ENCODE measurements at regions of chr5 and their contacts with region 1.

Region 1: DNA sequence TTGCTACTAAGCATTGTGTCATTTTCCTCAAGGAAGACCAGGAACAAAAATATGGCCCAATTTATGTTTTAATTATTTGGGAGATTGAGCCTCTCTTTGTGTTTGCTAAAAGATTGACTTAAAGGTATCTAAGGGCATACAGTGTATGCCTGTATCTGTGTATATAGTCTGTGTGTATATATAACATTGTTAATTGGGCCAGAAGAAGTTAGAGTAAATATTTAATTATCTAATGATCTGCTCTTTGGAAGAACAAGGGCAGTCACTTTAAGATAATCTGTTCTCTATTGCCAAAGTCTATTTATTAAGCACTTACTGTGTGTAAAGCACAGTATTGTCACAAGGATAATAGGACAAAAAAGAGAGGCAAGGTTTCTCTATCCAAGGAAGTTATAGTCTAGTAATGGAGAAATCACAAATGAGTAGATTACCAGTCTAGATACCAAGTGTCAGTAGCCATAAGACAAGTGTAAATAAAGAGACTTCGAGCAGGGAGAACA is 51.4 kb downstream of the SV2C start:
- DNase-seq: no peak
- H3K4me3 ChIP-seq: no peak overlapping the region
- H3K4me3 Mint-ChIP-seq: no peak overlapping the region
- H3K27ac ChIP-seq: no peak overlapping the region
- H3K27ac Mint-ChIP-seq: no peak overlapping the region
- H3K4me1 ChIP-seq: no peaks in the 10 kb centered on the region
- H3K4me1 Mint-ChIP-seq: no peaks in the 10 kb centered on the region
- H3K27me3 ChIP-seq: no peaks in the 10 kb centered on the region
- H3K27me3 Mint-ChIP-seq: peaks cover 7 to 16% of the 10 kb centered on the region in 2 donors

Region 2: GRCh38 chr5:76114179-76114851 is 20.3 kb before region 1 on chr5:
- CTCF ChIA-PET with region 1: no interaction called
- POLR2A ChIA-PET with region 1: no interaction called
- intact Hi-C with region 1: no loop called
- DNase-seq: no peak
- H3K4me3 ChIP-seq: no peak overlapping the region
- H3K4me3 Mint-ChIP-seq: no peak overlapping the region
- H3K27ac ChIP-seq: no peak overlapping the region
- H3K27ac Mint-ChIP-seq: no peak overlapping the region
- H3K4me1 ChIP-seq: no peaks in the 10 kb centered on the region
- H3K4me1 Mint-ChIP-seq: peaks cover 0 to 5% (median 0%) of the 10 kb centered on the region in 4 donors
- H3K27me3 ChIP-seq: no peaks in the 10 kb centered on the region
- H3K27me3 Mint-ChIP-seq: peaks cover 7 to 20% of the 10 kb centered on the region in 2 donors

Region 3: GRCh38 chr5:76145945-76146344 is 11.3 kb after region 1 on chr5:
- CTCF ChIA-PET with region 1: interaction called, 11 read pairs
- POLR2A ChIA-PET with region 1: no interaction called
- intact Hi-C with region 1: no loop called
- DNase-seq: no peak
- H3K4me3 ChIP-seq: no peak overlapping the region
- H3K4me3 Mint-ChIP-seq: no peak overlapping the region
- H3K27ac ChIP-seq: no peak overlapping the region
- H3K27ac Mint-ChIP-seq: no peak overlapping the region
- H3K4me1 ChIP-seq: no peaks in the 10 kb centered on the region
- H3K4me1 Mint-ChIP-seq: no peaks in the 10 kb centered on the region
- H3K27me3 ChIP-seq: no peaks in the 10 kb centered on the region
- H3K27me3 Mint-ChIP-seq: peaks cover 0 to 3% of the 10 kb centered on the region in 2 donors

Measured in CD4-positive, alpha-beta memory T cell (primary cell).